PC-9 (cell line): ENCODE measurements at regions of chr16 and their contacts with region 1.

Region 1: DNA sequence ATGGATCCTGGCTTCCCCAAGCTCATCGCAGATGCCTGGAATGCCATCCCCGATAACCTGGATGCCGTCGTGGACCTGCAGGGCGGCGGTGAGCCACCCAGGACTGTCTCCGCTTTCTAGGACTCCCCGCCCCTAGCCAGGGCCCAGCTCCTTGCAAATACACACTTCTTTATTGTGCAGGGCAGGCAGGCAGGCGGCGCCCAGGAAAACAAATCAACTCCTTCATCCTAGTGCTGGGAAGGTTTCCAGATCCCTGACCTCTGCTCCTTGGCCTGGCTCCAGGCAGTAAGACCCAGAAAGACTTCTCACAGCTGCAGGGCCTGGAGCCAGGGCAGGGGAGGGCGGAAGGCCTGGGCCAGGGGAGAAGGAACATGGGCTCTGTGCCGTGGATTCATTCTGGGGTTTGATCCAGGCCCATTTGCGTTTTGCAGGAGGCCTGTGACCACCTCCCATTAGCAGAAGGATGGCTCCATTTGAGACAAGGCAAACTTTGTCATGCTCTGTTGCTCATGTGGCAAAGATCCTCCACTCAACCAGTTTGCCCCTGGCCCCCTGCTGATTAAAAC is 6.0 kb upstream of the LPCAT2 start:
- DNase-seq: peak; percentile 78 to 87
- H3K4me3 ChIP-seq: no peak overlapping the region
- H3K27ac ChIP-seq: peak overlapping the region; percentile 69
- H3K4me1 ChIP-seq: peaks cover 58% of the 10 kb centered on the region
- H3K27me3 ChIP-seq: no peaks in the 10 kb centered on the region
- CTCF ChIP-seq: no peak

Region 2: GRCh38 chr16:55437625-55438024 is 65.3 kb before region 1 on chr16:
- CTCF ChIA-PET with region 1: no interaction called
- POLR2A ChIA-PET with region 1: no interaction called
- intact Hi-C with region 1: no loop called
- DNase-seq: peak in 1 of 2 experiments; percentile 93
- H3K4me3 ChIP-seq: no peak overlapping the region
- H3K27ac ChIP-seq: peak overlapping the region; percentile 74
- H3K4me1 ChIP-seq: peaks cover 19% of the 10 kb centered on the region
- H3K27me3 ChIP-seq: no peaks in the 10 kb centered on the region; the same call in 1 of the 2 replicates
- CTCF ChIP-seq: no peak

Region 3: GRCh38 chr16:55487048-55487803 is 15.7 kb before region 1 on chr16:
- CTCF ChIA-PET with region 1: no interaction called
- POLR2A ChIA-PET with region 1: interaction called, 10 read pairs
- intact Hi-C with region 1: no loop called
- DNase-seq: no peak
- H3K4me3 ChIP-seq: no peak overlapping the region
- H3K27ac ChIP-seq: no peak overlapping the region
- H3K4me1 ChIP-seq: peaks cover 1% of the 10 kb centered on the region; the same call in 1 of the 2 replicates
- H3K27me3 ChIP-seq: no peaks in the 10 kb centered on the region
- CTCF ChIP-seq: no peak

Region 4: DNA sequence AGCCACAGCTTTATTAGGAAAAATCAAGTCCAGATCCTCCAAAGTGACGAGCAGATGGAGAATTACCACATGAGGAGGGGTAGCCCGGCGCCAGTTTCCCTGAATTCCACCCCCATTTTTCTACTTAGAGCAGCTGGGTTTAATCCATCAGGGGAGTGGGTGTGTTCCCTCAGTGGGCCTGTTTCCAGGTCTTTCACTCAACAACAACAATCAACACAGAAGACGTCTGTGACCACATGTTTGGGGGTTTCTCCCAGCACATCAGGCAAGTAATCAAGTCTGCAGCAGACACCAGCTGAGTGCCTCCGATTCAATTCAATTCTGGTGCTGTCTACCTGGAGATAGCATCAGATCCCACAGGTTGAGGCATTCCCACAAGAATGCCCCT is 159.8 kb after region 1 on chr16:
- CTCF ChIA-PET with region 1: no interaction called
- POLR2A ChIA-PET with region 1: interaction called, 18 read pairs
- intact Hi-C with region 1: loop called (anchors 1 kb)
- DNase-seq: no peak
- H3K4me3 ChIP-seq: no peak overlapping the region
- H3K27ac ChIP-seq: peak overlapping the region; percentile 93
- H3K4me1 ChIP-seq: peaks cover 80% of the 10 kb centered on the region
- H3K27me3 ChIP-seq: no peaks in the 10 kb centered on the region
- CTCF ChIP-seq: no peak

Region 5: DNA sequence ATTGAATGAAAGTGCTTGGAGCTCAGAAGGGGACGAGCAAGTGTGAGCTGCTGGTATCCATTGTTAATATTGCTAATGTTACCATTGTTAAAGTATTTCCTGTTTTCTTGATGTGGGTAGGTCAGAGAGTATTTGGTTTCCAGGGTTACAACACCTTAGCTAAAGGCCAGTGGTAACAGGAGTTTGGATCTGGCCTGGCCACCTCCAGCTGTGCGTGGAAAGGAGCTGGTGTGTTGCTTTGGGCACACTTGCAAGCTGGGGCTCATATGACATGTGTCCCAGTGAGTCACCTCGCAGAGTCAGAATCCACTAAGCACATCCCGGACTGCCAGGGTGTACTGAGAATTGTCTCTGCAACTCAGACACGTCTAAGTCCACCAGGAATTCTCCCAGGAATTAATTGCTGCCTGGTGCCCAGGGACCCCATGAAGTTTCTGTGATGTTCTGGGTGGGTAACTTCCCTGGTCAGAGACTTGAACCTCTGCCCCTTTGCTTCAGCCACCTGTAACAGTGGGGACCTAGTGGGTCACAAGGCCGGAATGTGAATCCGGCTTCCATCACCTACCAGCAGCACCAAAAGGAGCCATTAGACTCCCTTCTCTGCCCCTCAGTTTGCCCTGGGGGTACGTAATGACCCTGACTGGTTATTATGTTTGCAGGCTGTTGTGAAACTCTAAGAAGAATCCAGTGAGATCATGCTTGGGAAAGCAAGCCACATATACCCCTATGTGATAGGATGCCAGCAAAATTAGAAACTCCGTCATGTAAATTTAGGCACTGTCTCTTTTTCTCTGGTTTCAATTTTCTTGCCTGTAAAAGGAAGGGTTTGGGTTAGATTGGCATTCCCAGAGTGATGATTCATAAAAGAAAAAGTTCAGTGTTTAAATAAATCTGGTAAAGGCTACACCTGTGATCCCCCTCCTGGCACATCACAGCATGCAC is 165.7 kb after region 1 on chr16:
- CTCF ChIA-PET with region 1: no interaction called
- POLR2A ChIA-PET with region 1: interaction called, 18 read pairs
- intact Hi-C with region 1: loop called (anchors 1 kb)
- DNase-seq: peak; percentile 86 to 99
- H3K4me3 ChIP-seq: peak overlapping the region; percentile 45; the same call in 1 of the 2 replicates
- H3K27ac ChIP-seq: peak overlapping the region; percentile 99
- H3K4me1 ChIP-seq: peaks cover 76% of the 10 kb centered on the region
- H3K27me3 ChIP-seq: no peaks in the 10 kb centered on the region
- CTCF ChIP-seq: no peak

Region 6: GRCh38 chr16:55687802-55688201 is 184.9 kb after region 1 on chr16:
- CTCF ChIA-PET with region 1: no interaction called
- POLR2A ChIA-PET with region 1: no interaction called
- intact Hi-C with region 1: no loop called
- DNase-seq: no peak
- H3K4me3 ChIP-seq: no peak overlapping the region
- H3K27ac ChIP-seq: no peak overlapping the region
- H3K4me1 ChIP-seq: peaks cover 8% of the 10 kb centered on the region; the same call in 1 of the 2 replicates
- H3K27me3 ChIP-seq: no peaks in the 10 kb centered on the region
- CTCF ChIP-seq: no peak

Region 7: DNA sequence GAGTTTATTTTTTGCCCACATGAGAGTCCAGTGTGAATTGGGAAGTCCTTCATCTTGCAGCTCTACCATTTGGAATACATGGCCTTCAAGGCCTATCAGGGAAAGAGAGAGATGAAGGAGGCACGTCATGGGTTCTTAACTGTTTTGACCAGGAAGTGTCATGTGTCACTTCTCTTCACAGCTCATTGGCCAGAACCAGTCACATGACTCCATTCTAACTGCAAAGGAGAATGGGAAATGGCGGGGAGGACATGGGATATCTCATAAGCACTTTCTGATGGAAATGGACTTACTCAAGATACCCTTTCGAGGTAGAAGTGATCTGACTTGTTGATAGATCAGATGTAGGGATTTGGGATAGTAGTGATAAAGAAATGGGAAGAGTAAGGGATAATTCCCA is 430.2 kb after region 1 on chr16:
- CTCF ChIA-PET with region 1: no interaction called
- POLR2A ChIA-PET with region 1: no interaction called
- intact Hi-C with region 1: no loop called
- DNase-seq: no peak
- H3K4me3 ChIP-seq: no peak overlapping the region
- H3K27ac ChIP-seq: no peak overlapping the region
- H3K4me1 ChIP-seq: no peaks in the 10 kb centered on the region
- H3K27me3 ChIP-seq: no peaks in the 10 kb centered on the region
- CTCF ChIP-seq: no peak

Region 8: DNA sequence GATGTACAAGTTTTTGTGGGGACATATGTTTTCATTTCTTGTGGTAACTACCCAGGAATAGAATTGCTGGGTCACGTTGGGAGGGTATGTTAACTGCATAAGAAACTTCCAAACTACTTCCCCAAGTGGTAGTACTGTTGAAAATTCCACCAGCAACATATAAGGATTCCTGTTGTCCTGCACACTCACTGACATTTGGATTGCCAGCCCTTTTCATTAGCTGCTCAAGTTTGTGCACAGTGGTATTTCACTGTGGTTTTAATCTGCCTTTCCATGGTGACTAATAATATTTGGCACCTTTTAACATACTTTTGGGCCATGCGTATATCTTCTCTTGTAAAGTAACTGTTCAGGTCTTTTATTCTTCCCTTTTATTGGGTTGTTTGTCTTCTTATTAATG is 791.7 kb after region 1 on chr16:
- CTCF ChIA-PET with region 1: no interaction called
- POLR2A ChIA-PET with region 1: interaction called, 22 read pairs
- intact Hi-C with region 1: no loop called
- DNase-seq: peak in 1 of 2 experiments; percentile 40
- H3K4me3 ChIP-seq: no peak overlapping the region
- H3K27ac ChIP-seq: no peak overlapping the region
- H3K4me1 ChIP-seq: peaks cover 6% of the 10 kb centered on the region; the same call in 1 of the 2 replicates
- H3K27me3 ChIP-seq: no peaks in the 10 kb centered on the region
- CTCF ChIP-seq: no peak

Region 9: DNA sequence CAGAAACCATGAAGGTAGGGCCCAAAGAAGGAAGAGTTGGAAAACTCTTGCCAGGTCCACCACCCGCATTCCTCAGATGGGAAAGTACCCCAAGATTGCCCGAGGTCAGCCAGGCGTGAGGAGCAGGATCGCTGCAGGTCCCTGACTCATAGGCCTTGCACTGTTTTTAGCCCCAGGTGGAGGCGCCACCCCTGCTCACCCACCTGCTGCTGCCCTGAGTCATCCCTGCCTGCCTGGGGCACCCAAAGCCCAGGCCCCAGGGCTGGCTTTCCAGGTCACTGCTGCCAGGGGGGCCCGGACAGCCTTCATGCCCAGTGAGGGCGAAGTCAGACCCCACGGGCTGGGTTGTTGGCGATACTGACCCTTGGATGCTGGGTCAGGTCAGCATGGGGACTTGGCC is 821.5 kb after region 1 on chr16:
- CTCF ChIA-PET with region 1: no interaction called
- POLR2A ChIA-PET with region 1: interaction called, 7 read pairs
- intact Hi-C with region 1: loop called (anchors 1 kb)
- DNase-seq: peak; percentile 95 to 97
- H3K4me3 ChIP-seq: no peak overlapping the region
- H3K27ac ChIP-seq: peak overlapping the region; percentile 94
- H3K4me1 ChIP-seq: peaks cover 48% of the 10 kb centered on the region
- H3K27me3 ChIP-seq: no peaks in the 10 kb centered on the region
- CTCF ChIP-seq: no peak

Region 10: DNA sequence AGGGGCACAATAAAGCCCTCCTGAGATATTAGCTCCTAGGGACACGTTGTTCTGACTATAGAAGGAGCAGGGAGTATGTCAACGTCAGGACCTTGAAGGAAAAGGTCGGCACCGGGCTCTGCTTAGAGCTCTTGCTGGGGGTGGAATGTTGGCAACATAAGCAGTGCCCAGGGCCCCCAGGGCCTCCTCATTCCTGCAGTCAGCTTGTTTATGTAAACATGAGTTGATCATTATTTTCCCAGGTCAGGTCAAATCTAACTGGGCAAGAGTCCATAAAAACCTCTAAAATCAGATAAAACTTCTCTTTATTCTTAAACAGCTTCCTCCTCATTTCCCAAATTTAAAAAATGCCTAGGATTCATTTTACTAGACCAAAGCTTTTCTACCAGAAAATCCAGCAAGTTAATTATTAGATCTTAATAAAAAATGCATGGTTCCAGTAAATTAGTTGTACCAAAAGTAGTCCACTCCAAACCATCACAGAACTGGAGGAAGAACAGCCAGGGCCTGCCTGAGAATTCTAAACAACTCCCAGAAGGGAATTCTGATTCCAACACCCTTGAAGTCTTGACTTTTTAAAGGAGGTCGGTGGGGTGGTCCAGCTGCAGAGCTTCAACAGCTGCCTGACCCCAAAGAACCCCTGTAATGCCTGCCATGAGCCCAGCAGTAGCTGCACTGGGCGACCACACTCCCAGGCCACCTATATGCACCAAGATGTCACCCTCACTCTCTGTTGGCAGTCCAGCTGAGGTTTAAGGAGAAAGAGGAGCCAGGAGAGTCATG is 868.2 kb after region 1 on chr16:
- CTCF ChIA-PET with region 1: no interaction called
- POLR2A ChIA-PET with region 1: no interaction called
- intact Hi-C with region 1: loop called (anchors 5 kb)
- DNase-seq: peak; percentile 73 to 92
- H3K4me3 ChIP-seq: no peak overlapping the region
- H3K27ac ChIP-seq: peak overlapping the region; percentile 49
- H3K4me1 ChIP-seq: peaks cover 45% of the 10 kb centered on the region
- H3K27me3 ChIP-seq: no peaks in the 10 kb centered on the region
- CTCF ChIP-seq: no peak